Thyroid gland (tissue), 4 donors: ENCODE measurements at regions of chr9 and their contacts with region 1.

Region 1: GRCh38 chr9:129177791-129178559 is at the start of gene IER5L:
- DNase-seq: peak; percentile 95 to 96
- H3K4me3 ChIP-seq: peak within 1 kb of the TSS; percentile 61 to 95 (median 81)
- H3K27ac ChIP-seq: peak within 1 kb of the TSS; percentile 94 to 100 (median 98)
- H3K4me1 ChIP-seq: peaks cover 21 to 22% of the 10 kb centered on the region in 2 donors
- H3K27me3 ChIP-seq: no peaks in the 10 kb centered on the region
- CTCF ChIP-seq: no peak
- POLR2A ChIP-seq: peak; percentile 65 to 99
- total RNA-seq, gene IER5L: 7.8 to 20.2 (median 12.6) TPM

Region 2: GRCh38 chr9:129093421-129094204 is 84.4 kb before region 1 on chr9:
- intact Hi-C with region 1: no loop called
- DNase-seq: no peak
- H3K4me3 ChIP-seq: no peak overlapping the region
- H3K27ac ChIP-seq: no peak overlapping the region
- H3K4me1 ChIP-seq: no peaks in the 10 kb centered on the region
- H3K27me3 ChIP-seq: no peaks in the 10 kb centered on the region
- CTCF ChIP-seq: no peak
- POLR2A ChIP-seq: no peak

Region 3: GRCh38 chr9:129139993-129140396 is 38.0 kb before region 1 on chr9:
- intact Hi-C with region 1: loop called (anchors 5 kb)
- DNase-seq: peak; percentile 92 to 95
- H3K4me3 ChIP-seq: peak overlapping the region; percentile 2 to 36 (median 28)
- H3K27ac ChIP-seq: peak overlapping the region; percentile 98 to 100 (median 100)
- H3K4me1 ChIP-seq: peaks cover 48 to 78% of the 10 kb centered on the region in 2 donors
- H3K27me3 ChIP-seq: no peaks in the 10 kb centered on the region
- CTCF ChIP-seq: no peak
- POLR2A ChIP-seq: peak; percentile 60 to 84

Region 4: DNA sequence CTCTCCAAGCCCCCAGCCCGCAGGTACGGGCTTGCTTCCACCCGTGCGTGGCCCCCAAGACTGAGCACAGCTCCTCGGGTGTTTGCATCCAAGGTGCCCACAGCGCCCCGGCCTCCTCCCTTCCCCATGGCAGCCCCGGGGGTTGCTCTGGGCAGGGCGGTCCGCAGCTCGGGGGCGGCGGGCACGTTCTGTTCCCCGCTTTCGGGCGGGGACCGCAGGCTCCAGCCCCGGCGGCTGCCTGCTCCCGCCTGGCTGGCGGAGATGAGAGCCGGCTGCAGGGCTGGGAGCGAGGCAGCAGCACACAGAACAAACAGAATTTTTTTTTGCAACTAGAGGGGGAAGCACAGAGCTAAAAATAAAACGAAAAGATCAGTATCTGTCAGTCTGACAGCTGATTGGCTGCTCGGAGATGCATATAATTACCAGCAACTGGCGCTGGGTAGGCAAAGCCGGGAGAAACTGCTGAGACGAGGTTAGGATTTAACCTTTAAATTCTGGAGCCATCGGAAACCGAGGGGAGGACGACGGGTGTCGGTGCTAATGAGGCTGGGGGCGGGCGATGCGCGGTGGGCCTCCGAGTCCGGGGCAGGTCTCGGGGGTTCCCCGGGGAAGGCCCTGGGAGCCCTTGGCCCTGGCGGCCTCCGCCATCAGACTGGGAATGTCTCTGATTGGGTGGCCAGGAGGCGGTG is 142.7 kb after region 1 on chr9:
- intact Hi-C with region 1: loop called (anchors 10 kb)
- DNase-seq: peak; percentile 74 to 77
- H3K4me3 ChIP-seq: peak overlapping the region in 1 of 3 donors; percentile 34
- H3K27ac ChIP-seq: peak overlapping the region; percentile 84 to 93 (median 88)
- H3K4me1 ChIP-seq: peaks cover 26 to 62% of the 10 kb centered on the region in 2 donors
- H3K27me3 ChIP-seq: no peaks in the 10 kb centered on the region
- CTCF ChIP-seq: peak in 4 of 6 experiments; percentile 32 to 39 (median 35)
- POLR2A ChIP-seq: peak; percentile 25 to 67

Region 5: GRCh38 chr9:129489838-129490582 is 312.0 kb after region 1 on chr9:
- intact Hi-C with region 1: loop called (anchors 5 kb)
- DNase-seq: peak; percentile 35 to 41
- H3K4me3 ChIP-seq: peak overlapping the region in 1 of 3 donors; percentile 46
- H3K27ac ChIP-seq: peak overlapping the region; percentile 100
- H3K4me1 ChIP-seq: peaks cover 57 to 83% of the 10 kb centered on the region in 2 donors
- H3K27me3 ChIP-seq: no peaks in the 10 kb centered on the region
- CTCF ChIP-seq: no peak
- POLR2A ChIP-seq: no peak

Region 6: GRCh38 chr9:129610473-129611301 is 432.7 kb after region 1 on chr9:
- intact Hi-C with region 1: loop called (anchors 5 kb)
- DNase-seq: peak; percentile 74 to 77
- H3K4me3 ChIP-seq: peak overlapping the region in 2 of 3 donors; percentile 54 to 66
- H3K27ac ChIP-seq: peak overlapping the region; percentile 78 to 86 (median 78)
- H3K4me1 ChIP-seq: peaks cover 14 to 53% of the 10 kb centered on the region in 2 donors
- H3K27me3 ChIP-seq: no peaks in the 10 kb centered on the region
- CTCF ChIP-seq: peak; percentile 36 to 99 (median 94)
- POLR2A ChIP-seq: peak in 1 of 2 donors; percentile 10